Activated CD4-positive, alpha-beta memory T cell treated with anti-CD3 and anti-CD28 coated beads for 36 hours (primary cell): ENCODE measurements at regions of chr16 and their contacts with region 1.

Region 1: DNA sequence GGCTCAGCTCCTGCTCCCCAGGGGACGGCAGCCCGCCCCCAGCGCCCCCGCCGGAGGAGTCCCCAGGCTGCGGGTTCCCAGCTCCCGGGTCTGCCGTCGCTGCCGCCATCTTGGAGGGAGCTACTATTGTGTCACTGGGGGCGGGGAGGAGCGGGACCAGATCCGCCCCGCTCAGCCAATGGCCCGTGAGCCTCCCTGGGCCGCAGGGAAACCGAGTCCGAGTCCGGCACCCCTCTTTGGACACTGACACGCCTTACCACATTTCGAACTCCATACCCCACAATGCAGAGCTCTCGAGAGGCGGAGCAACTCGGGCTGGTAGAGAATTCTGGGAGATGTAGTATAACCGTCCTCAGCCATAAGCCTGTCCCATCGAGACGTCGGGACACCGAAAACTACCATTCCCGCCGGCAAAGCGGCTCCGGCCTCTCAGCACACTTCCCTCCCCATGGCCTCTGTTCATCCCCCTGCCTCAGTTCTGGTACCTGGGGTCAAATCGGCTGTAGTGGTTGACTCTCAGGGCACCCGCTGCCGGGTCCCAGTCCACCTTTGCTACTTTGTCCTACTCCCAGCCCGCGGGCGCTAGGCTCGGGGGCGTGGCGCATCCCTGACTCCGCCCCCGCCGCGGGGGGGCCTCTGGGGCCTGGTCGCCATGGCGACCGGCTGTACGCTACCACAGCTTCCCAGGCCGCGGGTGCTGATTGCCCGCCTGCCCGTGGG is at the starts of genes RANBP10 and TSNAXIP1:
- DNase-seq: peak; percentile 98
- H3K4me3 Mint-ChIP-seq: peak within 1 kb of the TSS; percentile 93
- H3K27ac Mint-ChIP-seq: peak within 1 kb of the TSS; percentile 91
- H3K4me1 Mint-ChIP-seq: peaks cover 39% of the 10 kb centered on the region
- H3K27me3 Mint-ChIP-seq: no peaks in the 10 kb centered on the region
- total RNA-seq, gene RANBP10: 14.9 to 18.1 TPM
- total RNA-seq, gene TSNAXIP1: 0.77 to 0.81 TPM

Region 2: DNA sequence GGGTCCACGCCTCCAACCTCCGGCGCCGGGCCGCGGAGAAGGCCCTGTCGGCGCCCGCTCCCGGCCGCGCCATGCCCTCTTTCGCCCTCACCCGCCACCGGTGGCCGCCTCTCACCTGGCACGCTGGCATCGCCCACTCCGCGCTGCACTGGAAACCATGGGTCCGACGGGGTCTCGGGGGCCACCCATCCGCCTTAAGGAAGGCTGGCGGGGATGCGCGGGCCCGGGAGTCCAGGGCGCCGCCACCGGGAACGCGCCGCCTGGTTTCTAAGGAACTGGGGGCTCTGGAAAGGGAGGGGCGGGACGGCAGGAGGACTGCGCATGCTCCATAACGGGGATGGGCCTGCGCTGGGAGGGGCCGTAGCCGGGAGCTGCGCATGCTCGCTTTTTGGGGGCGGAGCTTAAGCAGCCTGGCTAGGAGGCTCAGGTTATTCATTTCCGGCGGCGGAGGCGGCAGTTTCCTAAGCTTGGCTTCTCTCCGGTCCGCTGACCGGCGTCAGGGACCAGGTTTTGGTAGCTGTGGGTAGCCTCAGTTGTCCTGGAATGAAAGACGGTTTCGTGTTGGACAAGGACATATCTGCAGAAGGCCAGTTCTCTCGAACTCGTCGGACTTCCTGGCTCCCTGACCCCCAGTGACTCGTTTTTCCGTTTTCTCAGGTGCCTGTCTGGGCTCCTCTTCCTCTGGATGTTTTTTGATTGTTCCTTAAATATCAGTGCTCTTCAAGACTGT is 87.4 kb before region 1 on chr16 and contains the start of gene GFOD2:
- CTCF ChIA-PET with region 1: interaction called, 4 read pairs
- POLR2A ChIA-PET with region 1: interaction called, 14 read pairs
- intact Hi-C with region 1: loop called (anchors 2 kb)
- DNase-seq: peak; percentile 99
- H3K4me3 Mint-ChIP-seq: peak within 1 kb of the TSS; percentile 94
- H3K27ac Mint-ChIP-seq: peak within 1 kb of the TSS; percentile 96
- H3K4me1 Mint-ChIP-seq: peaks cover 35% of the 10 kb centered on the region
- H3K27me3 Mint-ChIP-seq: no peaks in the 10 kb centered on the region
- total RNA-seq, gene GFOD2: 12.6 to 13.7 TPM